ENCODE measurements at regions of chr12 and their contacts with region 1.

Region 1: GRCh38 chr12:62793256-62794217 is 141.4 kb downstream of the PPM1H start:
- DNase-seq: peak; percentile 66
- H3K4me3 ChIP-seq: no peak overlapping the region
- H3K27ac ChIP-seq: no peak overlapping the region
- H3K27me3 ChIP-seq: no peaks in the 10 kb centered on the region
- CTCF ChIP-seq: peak; percentile 96

Region 2: DNA sequence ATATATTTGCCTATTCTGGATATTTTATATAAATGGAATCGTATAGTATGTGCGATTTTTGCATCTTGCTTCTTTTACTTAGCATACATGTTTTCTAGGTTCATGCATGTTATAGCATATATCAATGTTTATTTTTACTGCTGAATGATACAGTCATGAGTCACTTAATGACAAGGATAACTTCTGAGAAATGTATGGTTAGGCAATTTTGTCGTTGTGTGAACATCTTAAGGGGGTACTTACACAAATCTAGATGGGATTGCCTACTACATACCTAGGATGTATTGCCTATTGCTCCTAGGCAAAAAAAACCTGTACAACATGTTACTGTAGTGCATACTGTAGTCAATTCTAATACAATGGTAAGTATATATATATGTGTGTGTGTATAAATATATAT is 524.6 kb before region 1 on chr12:
- CTCF ChIA-PET with region 1: interaction called, 13 read pairs
- POLR2A ChIA-PET with region 1: no interaction called
- DNase-seq: no peak
- H3K4me3 ChIP-seq: no peak overlapping the region
- H3K27ac ChIP-seq: no peak overlapping the region
- H3K27me3 ChIP-seq: no peaks in the 10 kb centered on the region
- CTCF ChIP-seq: no peak

Region 3: DNA sequence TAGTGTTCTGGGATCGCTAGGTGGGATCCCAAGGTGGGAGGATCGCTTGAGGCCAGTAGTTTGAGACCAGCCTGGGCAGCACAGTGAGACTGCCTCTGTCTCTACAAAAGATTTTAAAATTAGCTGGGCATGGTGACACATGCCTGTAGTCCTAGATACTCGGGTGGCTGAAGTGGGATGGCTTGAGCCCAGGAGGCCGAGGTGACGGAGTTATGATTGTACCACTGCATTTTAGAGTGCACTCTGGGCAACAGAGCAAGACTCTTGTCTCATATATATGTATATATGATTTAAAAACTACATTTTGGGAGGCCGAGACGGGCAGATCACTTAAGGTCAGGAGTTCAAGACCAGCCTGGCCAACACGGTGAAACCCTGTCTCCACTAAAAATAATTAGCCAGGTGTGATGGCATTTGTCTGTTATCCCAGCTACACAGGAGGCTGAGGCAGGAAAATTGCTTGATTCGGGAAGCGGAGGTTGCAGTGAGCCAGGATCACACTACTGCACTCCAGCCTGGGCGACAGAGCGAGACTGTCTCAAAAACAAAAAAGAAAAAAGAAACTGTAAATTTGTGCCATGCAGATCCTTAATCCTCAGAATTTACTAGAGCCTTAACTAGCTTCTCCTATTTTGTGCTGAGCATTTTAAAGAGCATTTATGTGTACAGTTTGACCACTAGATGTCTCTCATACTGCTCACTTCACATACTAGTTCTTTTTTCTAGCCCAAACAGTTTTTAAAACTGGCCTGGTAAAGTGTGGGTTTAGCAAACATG is 212.1 kb before region 1 on chr12:
- CTCF ChIA-PET with region 1: interaction called, 347 read pairs
- POLR2A ChIA-PET with region 1: no interaction called
- DNase-seq: peak; percentile 20
- H3K4me3 ChIP-seq: no peak overlapping the region
- H3K27ac ChIP-seq: no peak overlapping the region
- H3K27me3 ChIP-seq: no peaks in the 10 kb centered on the region
- CTCF ChIP-seq: peak; percentile 77

Region 4: DNA sequence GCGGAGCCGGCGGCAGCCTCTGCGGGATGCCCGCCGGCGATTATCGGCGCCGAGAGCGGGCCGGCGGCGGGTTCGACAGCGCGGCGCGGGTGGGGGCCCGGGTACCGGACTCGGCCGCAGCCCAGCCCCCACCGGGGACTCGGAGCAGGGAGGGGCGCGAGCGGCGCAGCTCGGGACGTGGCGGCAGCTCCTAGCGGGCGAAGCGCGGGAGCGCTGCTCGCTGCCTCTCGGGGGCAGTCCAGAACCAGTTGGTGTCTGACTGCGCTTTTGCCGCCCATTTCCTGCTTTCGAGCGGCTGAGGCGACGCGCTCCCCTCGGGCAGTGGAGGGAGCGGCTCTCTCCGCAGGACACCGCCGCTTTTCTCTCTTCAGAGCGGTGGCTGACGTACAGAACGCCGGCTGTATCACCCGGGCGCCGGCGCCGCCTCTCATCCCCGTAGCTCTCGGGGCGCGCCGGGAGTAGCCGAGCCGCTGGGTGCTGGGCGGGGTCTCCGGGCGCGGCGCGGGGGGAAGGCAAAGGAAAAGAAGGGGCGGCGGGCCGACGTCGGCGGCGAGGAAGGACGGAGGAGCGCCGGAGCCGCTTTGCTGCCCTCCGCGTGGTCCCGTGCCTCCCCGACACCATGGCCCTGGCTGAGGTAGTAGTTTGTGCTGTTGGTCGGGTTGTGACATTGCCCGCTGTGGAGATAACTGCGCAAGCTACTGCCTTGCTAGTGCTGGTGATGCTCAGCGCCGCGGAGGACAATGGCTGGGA is 190.3 kb before region 1 on chr12:
- CTCF ChIA-PET with region 1: interaction called, 72 read pairs
- POLR2A ChIA-PET with region 1: interaction called, 18 read pairs
- DNase-seq: peak; percentile 72
- H3K4me3 ChIP-seq: peak overlapping the region; percentile 91
- H3K27ac ChIP-seq: peak overlapping the region; percentile 100
- H3K27me3 ChIP-seq: no peaks in the 10 kb centered on the region
- CTCF ChIP-seq: peak; percentile 56

Region 5: DNA sequence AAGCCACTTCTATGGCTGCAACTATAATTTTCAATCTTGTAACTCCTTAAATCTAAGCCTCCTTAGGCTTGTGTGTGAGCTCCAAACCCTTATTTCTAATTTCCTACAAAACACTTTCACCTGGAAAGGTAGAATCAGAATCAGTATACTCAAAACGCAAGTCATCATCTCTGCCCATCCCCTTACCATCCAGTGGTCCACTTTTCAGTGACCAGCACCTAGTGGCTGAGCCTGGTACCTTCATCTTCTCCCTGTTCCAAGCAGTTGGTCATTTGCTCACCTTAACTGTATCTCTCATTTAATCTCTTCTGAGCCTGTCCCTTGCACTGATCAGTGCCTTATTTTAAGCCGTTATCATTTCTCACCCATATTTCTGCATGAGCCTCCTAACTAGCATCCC is 33.5 kb after region 1 on chr12:
- CTCF ChIA-PET with region 1: no interaction called
- POLR2A ChIA-PET with region 1: no interaction called
- DNase-seq: no peak
- H3K4me3 ChIP-seq: no peak overlapping the region
- H3K27ac ChIP-seq: no peak overlapping the region
- H3K27me3 ChIP-seq: peaks cover 8% of the 10 kb centered on the region
- CTCF ChIP-seq: peak; percentile 31

Region 6: GRCh38 chr12:63068857-63069442 is 275.4 kb after region 1 on chr12:
- CTCF ChIA-PET with region 1: interaction called, 18 read pairs
- POLR2A ChIA-PET with region 1: no interaction called
- DNase-seq: peak; percentile 34
- H3K4me3 ChIP-seq: no peak overlapping the region
- H3K27ac ChIP-seq: no peak overlapping the region
- H3K27me3 ChIP-seq: no peaks in the 10 kb centered on the region
- CTCF ChIP-seq: peak; percentile 64